Vagina (tissue), 2 donors: ENCODE measurements at regions of chr2 and their contacts with region 1.

Region 1: GRCh38 chr2:37414470-37414949 is 70.1 kb downstream of the QPCT start:
- DNase-seq: no peak
- H3K4me3 ChIP-seq: no peak overlapping the region
- H3K27ac ChIP-seq: no peak overlapping the region
- H3K4me1 ChIP-seq: no peaks in the 10 kb centered on the region
- H3K27me3 ChIP-seq: no peaks in the 10 kb centered on the region
- CTCF ChIP-seq: peak; percentile 68 to 94 (median 78)
- POLR2A ChIP-seq: no peak

Region 2: DNA sequence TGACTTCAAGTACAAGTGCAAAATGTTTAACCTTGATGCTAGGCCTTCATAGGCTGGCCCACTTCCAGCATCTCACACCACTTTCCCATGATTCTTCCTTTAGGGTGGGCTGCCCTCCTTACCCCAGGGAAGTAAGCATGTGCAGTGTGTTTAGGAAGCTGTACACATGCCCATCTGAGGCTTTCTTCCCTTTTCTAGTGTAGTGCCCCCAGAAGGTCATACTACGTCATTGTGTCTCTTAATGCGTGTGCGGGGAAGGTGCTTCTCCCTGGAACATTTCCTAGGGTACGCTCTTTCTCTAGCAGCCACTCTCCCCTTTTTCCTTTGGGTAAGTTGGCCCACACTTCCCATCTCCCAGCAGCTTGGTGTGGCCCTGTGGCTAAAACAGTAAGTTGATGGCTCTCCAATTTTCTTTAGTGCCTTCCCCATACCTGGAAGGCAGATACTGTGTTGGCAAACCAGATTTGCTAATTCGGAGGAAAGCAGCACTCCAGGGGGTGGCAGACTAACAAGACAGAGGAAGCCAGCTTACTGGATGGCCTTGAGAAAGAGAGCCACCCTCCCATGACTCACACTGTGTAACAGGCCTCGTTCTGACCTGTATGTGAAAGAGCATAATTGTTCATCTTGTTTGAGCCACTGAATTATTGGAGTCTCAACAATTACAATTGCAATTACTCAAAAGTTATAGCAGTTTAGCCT is 224.9 kb before region 1 on chr2:
- intact Hi-C with region 1: no loop called
- DNase-seq: no peak
- H3K4me3 ChIP-seq: no peak overlapping the region
- H3K27ac ChIP-seq: no peak overlapping the region
- H3K4me1 ChIP-seq: no peaks in the 10 kb centered on the region
- H3K27me3 ChIP-seq: no peaks in the 10 kb centered on the region
- CTCF ChIP-seq: no peak
- POLR2A ChIP-seq: no peak

Region 3: GRCh38 chr2:37711308-37711731 is 296.8 kb after region 1 on chr2:
- intact Hi-C with region 1: no loop called
- DNase-seq: no peak
- H3K4me3 ChIP-seq: no peak overlapping the region
- H3K27ac ChIP-seq: no peak overlapping the region
- H3K4me1 ChIP-seq: no peaks in the 10 kb centered on the region
- H3K27me3 ChIP-seq: no peaks in the 10 kb centered on the region
- CTCF ChIP-seq: no peak
- POLR2A ChIP-seq: no peak

Region 4: GRCh38 chr2:37886745-37887144 is 472.2 kb after region 1 on chr2:
- intact Hi-C with region 1: loop called (anchors 5 kb)
- DNase-seq: no peak
- H3K4me3 ChIP-seq: no peak overlapping the region
- H3K27ac ChIP-seq: no peak overlapping the region
- H3K4me1 ChIP-seq: no peaks in the 10 kb centered on the region
- H3K27me3 ChIP-seq: no peaks in the 10 kb centered on the region
- CTCF ChIP-seq: no peak
- POLR2A ChIP-seq: no peak